Activated T-helper 1 cell treated with anti-CD3 and anti-CD28 coated beads, Interleukin-12 subunit alpha, Interleukin-12 subunit beta, Interleukin-2, Interleukin-4 antibody, amounts not matched to agents 30 ng/mL and 10 ng/mL and 1 ng/mL, durations not matched to agents 14 hours and 24 hours and 36 hours (primary cell): ENCODE measurements at regions of chr4 and their contacts with region 1.

Region 1: DNA sequence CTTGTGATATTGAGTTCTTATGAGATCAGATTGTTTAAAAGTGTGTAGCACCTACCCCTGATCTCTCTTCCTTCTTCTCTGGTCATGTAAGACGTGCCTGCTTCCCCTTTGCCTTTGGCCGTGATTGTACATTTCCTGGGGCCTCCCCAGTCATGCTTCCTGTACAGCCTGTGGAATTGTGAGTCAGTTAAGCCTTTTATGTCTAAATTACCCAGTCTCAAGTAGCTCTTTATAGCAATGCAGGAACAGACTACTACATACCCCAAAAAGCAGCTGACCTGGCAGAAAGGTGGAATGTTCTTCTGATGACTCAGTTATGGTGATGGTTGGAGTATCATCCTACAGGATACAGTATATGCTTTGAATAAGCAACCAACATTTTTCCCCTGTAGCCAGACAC is 11.4 kb upstream of the MCUB start:
- DNase-seq: no peak
- H3K4me3 Mint-ChIP-seq: no peak overlapping the region
- H3K27ac Mint-ChIP-seq: no peak overlapping the region
- H3K4me1 Mint-ChIP-seq: peaks cover 10% of the 10 kb centered on the region
- H3K27me3 Mint-ChIP-seq: no peaks in the 10 kb centered on the region

Region 2: DNA sequence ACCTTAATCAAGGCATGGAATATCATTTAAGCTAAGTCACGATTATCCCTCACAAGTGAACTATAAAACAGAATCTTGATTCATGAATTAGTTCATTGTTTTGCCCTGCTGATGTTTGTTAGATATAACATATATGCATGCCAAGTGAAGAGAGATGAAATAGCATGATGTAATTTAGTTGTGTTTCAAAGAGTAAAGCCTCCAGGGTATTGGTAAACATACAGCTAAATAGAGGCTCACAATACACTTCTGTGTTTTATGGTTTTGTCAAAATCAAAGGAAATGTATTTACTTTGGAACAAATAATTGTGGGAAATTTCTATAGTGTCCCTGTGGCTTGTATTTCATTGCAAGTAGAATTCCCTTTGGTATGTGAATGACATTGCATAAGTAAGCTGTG is 1311.0 kb before region 1 on chr4:
- intact Hi-C with region 1: loop called (anchors 5 kb)
- DNase-seq: no peak
- H3K4me3 Mint-ChIP-seq: no peak overlapping the region
- H3K27ac Mint-ChIP-seq: no peak overlapping the region
- H3K4me1 Mint-ChIP-seq: no peaks in the 10 kb centered on the region
- H3K27me3 Mint-ChIP-seq: no peaks in the 10 kb centered on the region